Activated CD4-positive, alpha-beta memory T cell treated with anti-CD3 and anti-CD28 coated beads, Interleukin-2, amount 10 ng/mL, durations not matched to agents 7 days and 5 days (primary cell): ENCODE measurements at regions of chr11 and their contacts with region 1.

Region 1: DNA sequence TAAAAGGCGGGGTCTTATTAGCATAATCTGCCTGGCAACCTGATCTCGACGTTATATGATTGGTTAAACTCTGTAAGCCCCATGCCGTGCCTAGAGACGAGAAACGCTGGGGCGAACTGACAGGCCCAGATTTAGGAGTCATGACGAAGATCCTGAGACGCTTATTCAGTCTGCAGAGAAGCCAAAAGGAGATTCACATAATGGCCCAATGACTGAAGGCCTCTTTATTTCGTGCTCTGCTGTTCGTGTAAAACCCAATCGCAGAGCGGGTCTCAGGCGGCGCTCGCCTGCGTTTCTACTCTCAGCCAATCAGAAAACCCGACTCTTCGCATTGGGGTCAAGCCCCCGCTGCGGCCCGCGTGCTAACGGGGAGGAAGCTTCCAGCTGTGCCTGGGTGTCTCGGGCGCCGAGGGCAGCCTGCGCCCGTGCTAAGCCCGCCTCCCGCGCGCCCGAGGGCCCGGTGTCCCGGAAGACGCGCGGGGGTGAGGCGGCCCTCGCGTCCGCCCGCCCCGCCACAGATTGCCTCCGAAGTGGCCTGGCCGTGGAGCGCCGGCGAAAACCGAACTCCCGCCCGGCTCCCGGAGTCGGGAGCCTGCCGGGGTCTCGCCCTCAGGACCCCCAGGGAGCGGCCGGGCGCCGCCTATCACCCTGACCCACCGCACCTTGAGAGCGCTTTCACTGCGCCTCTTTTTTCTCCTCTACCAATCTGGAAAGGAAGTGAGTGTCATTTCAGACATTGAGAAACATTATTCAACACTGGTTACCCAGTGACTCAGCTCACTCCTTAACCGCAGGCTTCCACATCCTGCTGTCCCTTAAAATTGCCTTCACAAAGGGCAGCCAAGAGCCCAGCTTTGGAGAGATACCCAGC is 446 bp upstream of the PRDM10 start:
- DNase-seq: peak; percentile 91
- H3K4me3 Mint-ChIP-seq: peak overlapping the region; percentile 97
- H3K27ac Mint-ChIP-seq: peak overlapping the region; percentile 98
- H3K4me1 Mint-ChIP-seq: peaks cover 33% of the 10 kb centered on the region
- H3K27me3 Mint-ChIP-seq: peaks cover 2% of the 10 kb centered on the region

Region 2: DNA sequence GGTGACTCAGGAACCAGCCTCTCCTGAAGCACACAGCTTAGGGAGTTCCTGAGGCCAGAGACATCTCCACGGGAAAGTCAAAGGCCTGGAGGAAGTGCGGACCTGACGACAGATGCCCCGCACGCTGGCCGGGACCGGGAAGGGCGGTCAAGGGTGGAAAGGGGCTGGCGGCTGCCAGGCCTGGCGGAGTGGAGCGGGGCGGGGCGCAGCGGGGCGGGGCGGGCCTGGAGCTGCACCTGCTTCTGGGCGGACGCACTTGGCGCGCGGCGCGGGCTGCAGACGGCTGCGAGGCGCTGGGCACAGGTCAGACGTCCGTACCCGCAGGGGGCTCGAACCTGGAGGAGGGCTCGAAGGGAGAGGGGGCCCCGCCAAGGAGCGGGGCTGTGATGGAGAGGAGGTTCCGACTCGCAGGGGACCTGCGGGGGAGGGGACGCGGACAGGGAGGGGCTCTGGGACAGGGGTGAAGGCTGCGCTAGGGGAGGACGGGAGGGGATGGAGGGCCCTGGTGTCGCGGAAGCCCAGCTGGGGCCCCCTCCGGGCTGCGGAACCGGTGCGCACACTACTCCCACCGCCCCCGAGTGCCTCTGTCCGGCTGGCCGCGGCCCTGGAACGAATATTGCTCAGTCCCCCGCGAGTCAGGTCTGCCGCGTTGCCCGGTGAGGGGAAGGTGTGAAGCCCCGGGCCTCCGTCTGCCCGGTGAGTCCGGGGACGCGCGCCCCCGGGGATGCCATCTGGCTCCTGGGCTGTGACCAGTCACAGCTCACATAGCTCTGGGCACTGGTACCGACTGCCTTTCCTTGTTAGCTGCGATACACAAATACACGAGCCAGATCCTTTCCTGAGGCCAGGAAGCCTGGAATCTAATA is 187.3 kb before region 1 on chr11 and contains the start of gene TMEM45B:
- CTCF ChIA-PET with region 1: no interaction called
- POLR2A ChIA-PET with region 1: interaction called, 15 read pairs
- DNase-seq: no peak
- H3K4me3 Mint-ChIP-seq: peak within 1 kb of the TSS; percentile 76
- H3K27ac Mint-ChIP-seq: peak within 1 kb of the TSS; percentile 88
- H3K4me1 Mint-ChIP-seq: peaks cover 37% of the 10 kb centered on the region
- H3K27me3 Mint-ChIP-seq: peaks cover 56% of the 10 kb centered on the region
- total RNA-seq, gene TMEM45B: 3.1 to 3.3 TPM

Region 3: GRCh38 chr11:129895126-129896041 is 107.7 kb before region 1 on chr11 and contains the start of gene NFRKB:
- CTCF ChIA-PET with region 1: interaction called, 5 read pairs
- POLR2A ChIA-PET with region 1: interaction called, 30 read pairs
- DNase-seq: peak; percentile 89
- H3K4me3 Mint-ChIP-seq: peak within 1 kb of the TSS; percentile 90
- H3K27ac Mint-ChIP-seq: peak within 1 kb of the TSS; percentile 77
- H3K4me1 Mint-ChIP-seq: peaks cover 34% of the 10 kb centered on the region
- H3K27me3 Mint-ChIP-seq: peaks cover 3% of the 10 kb centered on the region
- total RNA-seq, gene NFRKB: 39.2 to 44.9 TPM

Region 4: GRCh38 chr11:129992161-129992944 is 10.7 kb before region 1 on chr11:
- CTCF ChIA-PET with region 1: interaction called, 14 read pairs
- POLR2A ChIA-PET with region 1: interaction called, 30 read pairs
- DNase-seq: peak; percentile 40
- H3K4me3 Mint-ChIP-seq: no peak overlapping the region
- H3K27ac Mint-ChIP-seq: no peak overlapping the region
- H3K4me1 Mint-ChIP-seq: peaks cover 6% of the 10 kb centered on the region
- H3K27me3 Mint-ChIP-seq: no peaks in the 10 kb centered on the region

Region 5: GRCh38 chr11:130069684-130070108 is 66.6 kb after region 1 on chr11 and contains the start of gene APLP2:
- CTCF ChIA-PET with region 1: interaction called, 12 read pairs
- POLR2A ChIA-PET with region 1: interaction called, 56 read pairs
- DNase-seq: peak; percentile 96
- H3K4me3 Mint-ChIP-seq: peak within 1 kb of the TSS; percentile 86
- H3K27ac Mint-ChIP-seq: peak within 1 kb of the TSS; percentile 78
- H3K4me1 Mint-ChIP-seq: peaks cover 21% of the 10 kb centered on the region
- H3K27me3 Mint-ChIP-seq: peaks cover 21% of the 10 kb centered on the region
- total RNA-seq, gene APLP2: 31.1 to 33.2 TPM

Region 6: GRCh38 chr11:130139401-130139800 is 136.3 kb after region 1 on chr11:
- CTCF ChIA-PET with region 1: no interaction called
- POLR2A ChIA-PET with region 1: no interaction called
- DNase-seq: no peak
- H3K4me3 Mint-ChIP-seq: no peak overlapping the region
- H3K27ac Mint-ChIP-seq: no peak overlapping the region
- H3K4me1 Mint-ChIP-seq: no peaks in the 10 kb centered on the region
- H3K27me3 Mint-ChIP-seq: no peaks in the 10 kb centered on the region